Activated T-helper 1 cell treated with anti-CD3 and anti-CD28 coated beads, Interleukin-12 subunit alpha, Interleukin-12 subunit beta, Interleukin-2, Interleukin-4 antibody, amounts not matched to agents 30 ng/mL and 10 ng/mL and 1 ng/mL, durations not matched to agents 14 hours and 24 hours and 36 hours (primary cell): ENCODE measurements at regions of chr9 and their contacts with region 1.

Region 1: GRCh38 chr9:77841739-77842386 is 189.7 kb downstream of the GNAQ start:
- DNase-seq: no peak
- H3K4me3 Mint-ChIP-seq: no peak overlapping the region
- H3K27ac Mint-ChIP-seq: peak overlapping the region; percentile 45
- H3K4me1 Mint-ChIP-seq: peaks cover 27% of the 10 kb centered on the region
- H3K27me3 Mint-ChIP-seq: no peaks in the 10 kb centered on the region

Region 2: GRCh38 chr9:77433675-77434445 is 408.0 kb before region 1 on chr9:
- intact Hi-C with region 1: loop called (anchors 1 kb)
- DNase-seq: peak; percentile 15
- H3K4me3 Mint-ChIP-seq: no peak overlapping the region
- H3K27ac Mint-ChIP-seq: no peak overlapping the region
- H3K4me1 Mint-ChIP-seq: peaks cover 5% of the 10 kb centered on the region
- H3K27me3 Mint-ChIP-seq: peaks cover 3% of the 10 kb centered on the region

Region 3: GRCh38 chr9:77456829-77457437 is 384.9 kb before region 1 on chr9:
- intact Hi-C with region 1: loop called (anchors 1 kb)
- DNase-seq: peak; percentile 71
- H3K4me3 Mint-ChIP-seq: no peak overlapping the region
- H3K27ac Mint-ChIP-seq: no peak overlapping the region
- H3K4me1 Mint-ChIP-seq: peaks cover 25% of the 10 kb centered on the region
- H3K27me3 Mint-ChIP-seq: peaks cover 4% of the 10 kb centered on the region

Region 4: DNA sequence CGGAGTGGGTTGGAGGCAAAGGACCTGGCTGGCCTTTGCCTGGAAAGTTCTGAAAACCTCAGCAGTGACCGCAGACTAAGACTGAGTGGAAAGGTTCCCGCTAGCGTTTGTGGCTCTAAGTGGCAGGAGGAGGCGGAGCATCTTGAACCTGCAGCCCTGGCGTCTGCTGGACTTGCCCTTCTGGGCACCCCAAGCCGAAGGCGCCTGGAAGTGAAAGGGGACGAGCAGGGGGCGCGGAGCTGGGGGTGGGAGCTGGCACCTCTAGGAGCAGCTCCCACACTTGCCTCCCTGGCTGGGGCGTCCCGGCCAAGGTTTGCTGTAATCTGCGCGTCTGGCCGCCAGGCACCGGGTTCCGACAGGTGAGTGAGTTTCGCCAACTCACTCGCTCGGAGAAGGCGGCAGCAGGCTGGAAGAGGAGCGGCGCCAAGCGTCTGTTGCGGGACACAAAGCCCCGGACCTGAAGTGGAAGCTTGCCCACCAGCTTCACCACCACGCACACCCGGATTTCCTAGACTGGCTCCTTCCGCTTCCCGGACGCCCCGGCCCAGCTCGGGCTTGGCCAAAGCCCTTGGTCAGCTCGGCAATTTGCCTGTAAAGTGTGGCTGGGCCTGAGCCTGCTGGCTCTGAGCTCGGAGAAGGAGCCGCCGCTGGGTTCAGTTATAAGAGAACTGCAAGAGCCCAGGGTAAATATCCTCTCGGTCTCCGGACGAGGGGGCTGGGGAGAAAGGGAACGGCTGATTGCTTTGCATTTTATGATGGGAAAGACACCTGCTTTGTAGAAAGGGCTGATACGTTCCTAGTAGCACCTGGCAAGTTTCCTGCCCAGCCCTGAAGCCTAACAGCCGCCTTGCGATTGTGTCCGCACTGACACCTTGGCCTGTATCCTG is 193.4 kb before region 1 on chr9 and contains the start of gene GNA14:
- intact Hi-C with region 1: loop called (anchors 10 kb)
- DNase-seq: no peak
- H3K4me3 Mint-ChIP-seq: peak within 1 kb of the TSS; percentile 68
- H3K27ac Mint-ChIP-seq: peak within 1 kb of the TSS; percentile 23
- H3K4me1 Mint-ChIP-seq: peaks cover 4% of the 10 kb centered on the region
- H3K27me3 Mint-ChIP-seq: peaks cover 56% of the 10 kb centered on the region
- total RNA-seq, gene GNA14: not detected in 2 replicates

Region 5: GRCh38 chr9:77977210-77977611 is 135.3 kb after region 1 on chr9:
- intact Hi-C with region 1: loop called (anchors 5 kb)
- DNase-seq: peak; percentile 34
- H3K4me3 Mint-ChIP-seq: peak overlapping the region; percentile 40
- H3K27ac Mint-ChIP-seq: peak overlapping the region; percentile 81
- H3K4me1 Mint-ChIP-seq: peaks cover 51% of the 10 kb centered on the region
- H3K27me3 Mint-ChIP-seq: no peaks in the 10 kb centered on the region

Region 6: DNA sequence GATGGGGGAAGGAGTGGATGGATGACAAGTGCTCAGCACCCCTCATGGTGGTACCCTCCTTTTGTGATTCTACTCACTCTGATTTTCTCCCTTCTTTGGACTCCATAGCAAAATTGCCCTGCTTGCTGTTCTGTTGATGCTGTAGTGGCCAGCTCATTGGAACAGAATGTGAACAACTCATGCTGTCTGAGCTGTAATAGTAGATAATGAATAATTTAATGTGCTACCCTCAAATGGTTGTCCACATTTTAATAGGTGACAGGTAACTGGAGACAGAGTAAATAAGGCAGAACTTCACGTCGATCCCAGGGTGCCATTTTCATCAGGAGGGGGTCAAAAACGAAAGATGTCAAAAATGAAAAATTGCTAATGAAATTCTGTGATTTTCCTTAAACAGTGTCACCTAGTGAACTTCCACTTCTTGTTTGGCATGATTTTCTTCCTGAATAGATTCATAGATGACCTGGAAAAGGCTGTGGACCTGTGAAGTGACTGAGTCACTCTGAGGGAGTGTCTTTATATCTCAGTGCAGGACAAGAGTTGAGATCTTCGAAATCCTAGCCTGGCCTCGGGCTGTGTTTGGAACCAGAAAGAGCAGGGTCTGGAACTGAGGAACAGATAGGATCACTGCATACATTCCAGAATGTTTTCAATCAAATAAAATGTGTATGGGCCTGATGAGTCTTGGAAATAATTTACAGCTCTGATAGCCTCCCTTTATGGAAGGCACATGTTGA is 725.3 kb after region 1 on chr9:
- intact Hi-C with region 1: no loop called
- DNase-seq: no peak
- H3K4me3 Mint-ChIP-seq: no peak overlapping the region
- H3K27ac Mint-ChIP-seq: no peak overlapping the region
- H3K4me1 Mint-ChIP-seq: no peaks in the 10 kb centered on the region
- H3K27me3 Mint-ChIP-seq: no peaks in the 10 kb centered on the region